Heart left ventricle (tissue), 16 donors: ENCODE measurements at regions of chr10 and their contacts with region 1.

Region 1: DNA sequence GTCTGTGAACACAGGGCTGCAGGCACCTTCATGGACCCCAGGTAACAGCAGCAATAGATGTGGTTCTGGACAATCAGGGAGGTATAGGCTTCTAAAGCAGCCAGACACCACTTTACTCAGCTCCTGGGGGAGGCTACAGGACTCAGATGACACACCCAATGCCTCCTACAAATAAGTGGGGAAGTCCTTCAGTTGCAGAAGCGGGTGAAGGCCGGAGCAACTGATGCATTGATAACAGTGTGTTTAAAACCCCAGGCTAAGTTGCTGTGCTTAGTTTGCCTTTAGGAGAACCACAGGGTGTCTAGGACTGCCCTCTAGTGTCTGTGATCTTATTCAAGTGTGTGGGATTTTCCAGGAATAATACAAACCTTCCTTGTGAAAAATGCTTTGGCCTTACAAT is 5.9 kb upstream of the ITGA8 start:
- DNase-seq: no peak
- ATAC-seq: peak in 3 of 4 donors; percentile 51 to 69 (median 68)
- H3K4me3 ChIP-seq: no peak overlapping the region
- H3K27ac ChIP-seq: no peak overlapping the region
- H3K4me1 ChIP-seq: peaks cover 0 to 10% (median 0%) of the 10 kb centered on the region in 12 donors
- H3K27me3 ChIP-seq: peaks cover 0 to 14% (median 0%) of the 10 kb centered on the region in 9 donors
- CTCF ChIP-seq: peak; percentile 25 to 69 (median 56)
- POLR2A ChIP-seq: no peak

Region 2: DNA sequence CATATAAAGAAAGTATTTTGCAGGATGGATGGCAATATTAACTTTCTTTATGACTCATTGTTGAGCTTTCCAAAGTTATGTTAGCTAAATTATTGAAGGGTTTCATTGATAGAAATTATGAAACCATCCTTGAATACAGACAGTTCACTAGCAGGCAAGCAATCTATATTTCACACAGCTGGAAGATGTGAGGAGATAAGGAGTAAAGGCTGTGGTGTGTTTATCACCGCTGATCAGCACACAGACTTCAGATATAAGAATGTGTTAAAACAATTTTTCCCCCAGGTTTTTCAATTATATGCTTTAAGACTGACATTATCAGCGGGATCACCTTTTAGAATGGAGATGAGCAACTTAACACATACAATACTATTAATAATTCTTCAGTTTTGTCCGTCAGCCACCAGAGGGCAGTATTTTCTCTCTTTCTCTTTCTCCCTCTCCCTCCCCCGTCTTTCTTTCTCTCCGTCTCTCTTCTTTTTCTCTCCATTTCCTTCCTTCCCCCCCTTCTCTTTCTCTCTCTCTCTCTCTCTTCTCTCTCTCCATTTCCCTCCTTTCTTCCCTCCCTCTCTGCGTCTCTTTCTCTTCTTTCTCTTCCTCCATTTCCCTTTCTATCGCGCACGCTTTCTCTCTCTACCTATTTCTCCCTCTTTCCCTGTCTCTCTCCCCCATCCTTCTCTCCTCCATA is 291.6 kb before region 1 on chr10:
- intact Hi-C with region 1: loop called in 7 of 10 experiments (anchors 2 to 5 kb)
- DNase-seq: peak in 2 of 5 donors; percentile 33 to 34
- ATAC-seq: peak; percentile 32 to 73 (median 63)
- H3K4me3 ChIP-seq: peak overlapping the region in 10 of 12 donors; percentile 25 to 57 (median 42)
- H3K27ac ChIP-seq: no peak overlapping the region
- H3K4me1 ChIP-seq: peaks cover 0 to 7% (median 2%) of the 10 kb centered on the region in 12 donors
- H3K27me3 ChIP-seq: no peaks in the 10 kb centered on the region
- CTCF ChIP-seq: peak; percentile 63 to 82 (median 74)
- POLR2A ChIP-seq: no peak

Region 3: GRCh38 chr10:15595260-15595659 is 130.3 kb before region 1 on chr10:
- intact Hi-C with region 1: no loop called
- DNase-seq: no peak
- ATAC-seq: no peak
- H3K4me3 ChIP-seq: no peak overlapping the region
- H3K27ac ChIP-seq: no peak overlapping the region
- H3K4me1 ChIP-seq: peaks cover 0 to 3% (median 0%) of the 10 kb centered on the region in 12 donors
- H3K27me3 ChIP-seq: no peaks in the 10 kb centered on the region
- CTCF ChIP-seq: no peak
- POLR2A ChIP-seq: no peak